ENCODE measurements at regions of chr12 and their contacts with region 1.

Region 1: GRCh38 chr12:47837190-47838171 is 17.8 kb upstream of the HDAC7 start:
- DNase-seq: peak; percentile 73
- ATAC-seq: peak; percentile 46
- H3K4me3 Mint-ChIP-seq: no peak overlapping the region
- H3K27ac Mint-ChIP-seq: peak overlapping the region; percentile 2
- H3K4me1 Mint-ChIP-seq: peaks cover 58% of the 10 kb centered on the region
- H3K27me3 Mint-ChIP-seq: peaks cover 2% of the 10 kb centered on the region

Region 2: DNA sequence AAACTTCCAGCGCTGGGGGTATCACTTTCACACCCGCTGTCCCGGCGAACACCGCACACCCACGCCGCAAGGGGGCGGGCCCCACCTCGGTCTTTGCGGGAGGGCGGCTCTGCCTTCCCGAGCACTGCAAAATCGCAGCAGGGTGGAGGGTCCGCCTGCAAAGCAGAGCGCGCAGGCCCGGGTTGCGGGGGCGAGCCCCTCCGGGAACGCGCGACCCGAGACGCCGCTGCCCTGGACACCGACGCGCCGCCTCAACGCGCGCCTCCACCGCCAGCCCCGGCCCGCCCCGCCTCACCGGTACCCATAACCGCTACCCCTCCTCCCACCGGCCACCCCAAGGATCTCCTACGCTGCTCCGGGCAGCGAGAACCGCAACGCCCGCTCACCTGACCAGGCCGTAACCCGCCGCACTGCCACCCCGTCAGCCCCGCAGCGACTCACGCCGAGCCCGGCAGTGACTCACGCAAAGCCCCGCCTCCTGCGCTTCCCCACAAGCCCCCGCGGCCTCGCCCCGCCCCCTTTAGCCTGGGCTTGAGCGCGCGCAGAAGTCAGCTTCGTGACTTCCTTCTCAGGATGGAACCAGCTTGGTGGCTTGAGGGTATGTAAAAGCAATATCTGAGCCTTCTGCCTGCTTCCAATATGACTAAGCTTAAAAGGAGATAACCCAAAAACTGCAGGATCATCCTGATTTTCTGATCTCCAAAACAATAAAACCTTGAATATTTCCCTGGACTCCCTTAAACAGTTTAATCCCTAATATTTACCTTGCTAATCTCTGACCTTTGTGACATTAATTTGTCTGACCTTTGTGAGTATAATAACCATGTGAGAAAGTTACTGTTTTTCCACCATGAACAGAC is 131.7 kb before region 1 on chr12 and contains the start of gene RPAP3:
- CTCF ChIA-PET with region 1: interaction called, 167 read pairs
- DNase-seq: peak; percentile 99
- ATAC-seq: peak; percentile 97
- H3K4me3 Mint-ChIP-seq: peak within 1 kb of the TSS; percentile 87
- H3K27ac Mint-ChIP-seq: peak within 1 kb of the TSS; percentile 99
- H3K4me1 Mint-ChIP-seq: peaks cover 55% of the 10 kb centered on the region
- H3K27me3 Mint-ChIP-seq: no peaks in the 10 kb centered on the region
- total RNA-seq, gene RPAP3: 41.3 to 51.4 TPM

Region 3: GRCh38 chr12:47742253-47742825 is 95.1 kb before region 1 on chr12:
- CTCF ChIA-PET with region 1: interaction called, 385 read pairs
- DNase-seq: peak; percentile 85
- ATAC-seq: peak; percentile 69
- H3K4me3 Mint-ChIP-seq: no peak overlapping the region
- H3K27ac Mint-ChIP-seq: peak overlapping the region; percentile 35
- H3K4me1 Mint-ChIP-seq: peaks cover 14% of the 10 kb centered on the region
- H3K27me3 Mint-ChIP-seq: peaks cover 26% of the 10 kb centered on the region

Region 4: DNA sequence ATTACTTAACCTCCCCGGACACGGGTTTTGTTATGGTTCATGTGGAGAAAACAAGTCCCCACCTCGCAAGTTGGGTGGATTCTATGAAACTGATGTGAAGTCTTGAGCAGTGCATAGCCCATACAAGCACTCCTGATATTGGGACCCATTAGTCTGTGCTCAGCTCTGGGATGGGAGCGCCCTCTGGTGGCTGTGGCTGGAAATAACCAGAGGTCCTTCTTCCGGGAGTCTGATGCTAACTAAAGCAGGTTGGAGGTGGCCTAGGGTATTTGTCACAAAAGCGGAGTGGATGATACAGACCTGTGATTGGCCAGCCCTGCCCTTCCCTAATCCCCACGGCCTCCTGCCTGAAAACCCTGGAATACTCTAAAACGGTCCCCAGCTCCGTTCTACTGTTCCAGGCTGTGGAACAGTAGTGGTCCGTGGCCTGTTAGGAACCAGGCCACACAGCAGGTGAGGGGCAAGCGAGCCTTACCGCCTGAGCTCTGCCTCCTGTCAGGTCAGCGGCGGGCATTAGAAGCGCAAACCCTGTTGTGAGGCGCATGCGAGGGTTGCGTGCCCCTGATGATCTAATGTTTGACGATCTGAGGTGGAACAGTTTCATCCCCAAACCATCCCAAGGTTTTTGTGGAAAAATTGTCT is 58.1 kb before region 1 on chr12:
- CTCF ChIA-PET with region 1: interaction called, 377 read pairs
- DNase-seq: peak; percentile 94
- ATAC-seq: peak; percentile 87
- H3K4me3 Mint-ChIP-seq: no peak overlapping the region
- H3K27ac Mint-ChIP-seq: peak overlapping the region; percentile 21
- H3K4me1 Mint-ChIP-seq: peaks cover 38% of the 10 kb centered on the region
- H3K27me3 Mint-ChIP-seq: no peaks in the 10 kb centered on the region

Region 5: GRCh38 chr12:47812797-47813510 is 24.5 kb before region 1 on chr12:
- CTCF ChIA-PET with region 1: interaction called, 775 read pairs
- DNase-seq: peak; percentile 98
- ATAC-seq: peak; percentile 73
- H3K4me3 Mint-ChIP-seq: peak overlapping the region; percentile 91
- H3K27ac Mint-ChIP-seq: peak overlapping the region; percentile 96
- H3K4me1 Mint-ChIP-seq: peaks cover 87% of the 10 kb centered on the region
- H3K27me3 Mint-ChIP-seq: no peaks in the 10 kb centered on the region

Region 6: DNA sequence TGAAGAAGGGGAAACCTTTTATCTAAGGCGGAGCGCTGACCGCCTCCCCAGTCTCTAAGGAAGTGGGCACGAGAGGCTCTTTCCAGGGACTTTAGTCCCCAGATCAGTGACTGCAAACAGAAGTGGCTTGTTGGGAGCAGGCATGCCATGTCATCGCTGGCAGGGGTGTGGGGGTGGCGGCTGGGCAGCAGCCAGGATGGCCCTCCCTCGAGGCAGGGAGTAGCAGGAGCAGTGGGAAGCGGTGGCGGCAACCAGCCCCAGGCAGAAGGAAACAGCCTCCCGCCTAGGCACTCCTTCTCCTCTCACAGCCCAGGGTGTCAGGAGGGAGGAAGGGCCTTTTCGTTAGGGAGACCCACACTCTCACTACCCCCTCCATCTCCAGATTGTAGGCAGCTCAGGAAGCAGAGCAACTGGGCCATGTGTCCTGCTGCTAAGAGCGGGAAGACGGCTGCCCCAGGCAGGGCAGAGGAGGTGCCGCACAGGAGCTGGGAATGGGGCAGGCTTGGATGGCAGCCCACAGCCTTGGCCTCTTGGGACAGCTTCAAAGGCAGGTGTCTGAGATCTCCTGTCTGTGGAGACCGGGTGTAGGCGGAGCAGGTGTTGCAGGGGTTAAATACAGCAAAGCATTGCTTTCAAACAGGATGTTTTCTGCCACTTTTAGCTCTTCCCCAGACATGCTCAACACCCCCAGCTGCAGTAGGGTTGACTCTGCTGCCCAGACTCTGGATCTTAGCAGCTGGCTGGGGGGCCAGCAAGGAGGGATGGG is 45.5 kb after region 1 on chr12:
- CTCF ChIA-PET with region 1: interaction called, 45 read pairs
- DNase-seq: peak; percentile 68
- ATAC-seq: peak; percentile 43
- H3K4me3 Mint-ChIP-seq: peak overlapping the region; percentile 73
- H3K27ac Mint-ChIP-seq: peak overlapping the region; percentile 96
- H3K4me1 Mint-ChIP-seq: peaks cover 80% of the 10 kb centered on the region
- H3K27me3 Mint-ChIP-seq: no peaks in the 10 kb centered on the region

Region 7: DNA sequence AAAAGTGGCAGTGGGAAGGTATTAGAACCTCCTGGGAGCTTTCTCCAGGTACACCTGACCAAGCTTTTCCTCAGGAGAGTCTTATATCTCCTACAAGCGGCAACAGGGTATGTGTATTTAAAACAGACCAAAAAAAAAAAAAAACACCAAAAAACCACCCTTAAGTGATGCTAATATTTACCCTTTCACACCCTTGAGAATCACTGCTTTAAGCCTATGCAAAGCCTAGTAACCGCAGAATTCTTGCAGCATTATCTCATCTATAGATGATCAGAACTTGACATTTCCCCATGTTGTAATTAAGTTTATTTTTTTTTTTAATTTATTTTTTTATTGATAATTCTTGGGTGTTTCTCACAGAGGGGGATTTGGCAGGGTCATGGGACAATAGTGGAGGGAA is 493.9 kb after region 1 on chr12:
- CTCF ChIA-PET with region 1: no interaction called
- DNase-seq: no peak
- ATAC-seq: no peak
- H3K4me3 Mint-ChIP-seq: no peak overlapping the region
- H3K27ac Mint-ChIP-seq: no peak overlapping the region
- H3K4me1 Mint-ChIP-seq: no peaks in the 10 kb centered on the region
- H3K27me3 Mint-ChIP-seq: peaks cover 6% of the 10 kb centered on the region

Measured in activated CD8-positive, alpha-beta memory T cell treated with anti-CD3 and anti-CD28 coated beads, Interleukin-2, amount 10 ng/mL, durations not matched to agents 7 days and 5 days (primary cell).